HCT116 (cell line): ENCODE measurements at regions of chr10 and their contacts with region 1.

Region 1: GRCh38 chr10:4767033-4767814 is 58.8 kb upstream of the AKR1E2 start:
- DNase-seq: peak; percentile 38
- ATAC-seq: peak; percentile 58
- H3K4me3 ChIP-seq: no peak overlapping the region
- H3K27ac ChIP-seq: no peak overlapping the region
- H3K4me1 ChIP-seq: peaks cover 13 to 66% of the 10 kb centered on the region in 2 experiments
- H3K27me3 ChIP-seq: no peaks in the 10 kb centered on the region
- CTCF ChIP-seq: peak; percentile 51 to 71 (median 69); a peak in 5 of 6 replicates
- POLR2A ChIP-seq: no peak
- RAD21 ChIP-seq: peak; percentile 90

Region 2: GRCh38 chr10:3197348-3198003 is 1569.7 kb before region 1 on chr10:
- CTCF ChIA-PET with region 1: interaction called, 15 read pairs
- POLR2A ChIA-PET with region 1: interaction called, 4 read pairs
- RAD21 ChIA-PET with region 1: interaction called, 4 read pairs
- intact Hi-C with region 1: loop called (anchors 1 kb)
- DNase-seq: peak; percentile 74
- ATAC-seq: peak; percentile 97
- H3K4me3 ChIP-seq: peak overlapping the region; percentile 27 to 47
- H3K27ac ChIP-seq: no peak overlapping the region
- H3K4me1 ChIP-seq: peaks cover 7 to 14% of the 10 kb centered on the region in 2 experiments; a peak in 3 of 4 replicates
- H3K27me3 ChIP-seq: peaks cover 24% of the 10 kb centered on the region; the same call in 1 of the 2 replicates
- CTCF ChIP-seq: peak; percentile 78 to 96 (median 87)
- POLR2A ChIP-seq: no peak
- RAD21 ChIP-seq: peak; percentile 99

Region 3: GRCh38 chr10:4174197-4174596 is 593.0 kb before region 1 on chr10:
- CTCF ChIA-PET with region 1: no interaction called
- POLR2A ChIA-PET with region 1: no interaction called
- RAD21 ChIA-PET with region 1: interaction called in 1 of 2 experiments, 4 read pairs
- intact Hi-C with region 1: loop called (anchors 1 kb)
- DNase-seq: no peak
- ATAC-seq: peak; percentile 79
- H3K4me3 ChIP-seq: no peak overlapping the region
- H3K27ac ChIP-seq: no peak overlapping the region
- H3K4me1 ChIP-seq: peaks cover 0 to 5% of the 10 kb centered on the region in 2 experiments; a peak in 1 of 4 replicates
- H3K27me3 ChIP-seq: no peaks in the 10 kb centered on the region
- CTCF ChIP-seq: peak; percentile 31 to 66 (median 46); a peak in 5 of 6 replicates
- POLR2A ChIP-seq: no peak
- RAD21 ChIP-seq: peak; percentile 77

Region 4: DNA sequence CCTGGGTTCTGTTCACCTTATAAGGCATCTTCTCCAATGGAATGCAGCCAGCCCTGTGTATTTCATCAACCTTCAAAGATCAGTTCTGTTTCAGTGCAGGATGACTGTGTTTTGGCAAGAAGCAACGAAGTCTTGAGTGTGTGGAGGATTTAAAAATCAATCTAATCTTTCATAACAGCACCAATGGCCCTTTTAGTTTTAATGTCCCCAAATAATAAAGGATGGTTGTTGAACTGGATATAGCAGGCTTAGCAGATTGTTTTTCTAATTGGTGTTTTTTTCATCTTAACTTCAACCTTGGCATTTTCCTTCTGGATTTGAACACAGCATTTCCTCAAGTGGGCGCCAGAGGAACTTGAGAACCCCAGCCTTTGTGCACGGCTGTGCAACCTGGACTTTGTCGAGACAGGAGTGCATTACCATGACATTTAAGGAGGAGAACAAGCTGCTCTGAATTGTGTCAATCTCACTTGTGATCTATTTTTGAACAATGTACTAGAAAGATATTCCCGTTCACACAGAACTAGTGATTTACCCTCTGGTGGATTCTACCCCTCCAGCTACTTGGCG is 254.5 kb before region 1 on chr10:
- CTCF ChIA-PET with region 1: interaction called, 11 read pairs
- POLR2A ChIA-PET with region 1: no interaction called
- RAD21 ChIA-PET with region 1: no interaction called
- intact Hi-C with region 1: loop called (anchors 2 kb)
- DNase-seq: peak; percentile 36
- ATAC-seq: peak; percentile 83
- H3K4me3 ChIP-seq: no peak overlapping the region
- H3K27ac ChIP-seq: no peak overlapping the region
- H3K4me1 ChIP-seq: peaks cover 0 to 5% of the 10 kb centered on the region in 2 experiments; a peak in 1 of 4 replicates
- H3K27me3 ChIP-seq: no peaks in the 10 kb centered on the region
- CTCF ChIP-seq: peak; percentile 62 to 71 (median 63); a peak in 4 of 6 replicates
- POLR2A ChIP-seq: no peak
- RAD21 ChIP-seq: peak; percentile 87

Region 5: GRCh38 chr10:4595719-4596319 is 171.4 kb before region 1 on chr10:
- CTCF ChIA-PET with region 1: no interaction called
- POLR2A ChIA-PET with region 1: no interaction called
- RAD21 ChIA-PET with region 1: no interaction called
- intact Hi-C with region 1: no loop called
- DNase-seq: no peak
- ATAC-seq: no peak
- H3K4me3 ChIP-seq: no peak overlapping the region
- H3K27ac ChIP-seq: no peak overlapping the region
- H3K4me1 ChIP-seq: no peaks in the 10 kb centered on the region
- H3K27me3 ChIP-seq: no peaks in the 10 kb centered on the region
- CTCF ChIP-seq: no peak
- POLR2A ChIP-seq: no peak
- RAD21 ChIP-seq: no peak

Region 6: GRCh38 chr10:4671451-4672145 is 95.6 kb before region 1 on chr10:
- CTCF ChIA-PET with region 1: interaction called, 4 read pairs
- POLR2A ChIA-PET with region 1: no interaction called
- RAD21 ChIA-PET with region 1: no interaction called
- intact Hi-C with region 1: loop called (anchors 5 kb)
- DNase-seq: peak; percentile 77
- ATAC-seq: peak; percentile 86
- H3K4me3 ChIP-seq: peak overlapping the region; percentile 27 to 47
- H3K27ac ChIP-seq: peak overlapping the region; percentile 69
- H3K4me1 ChIP-seq: peaks cover 10 to 44% of the 10 kb centered on the region in 2 experiments
- H3K27me3 ChIP-seq: no peaks in the 10 kb centered on the region
- CTCF ChIP-seq: no peak
- POLR2A ChIP-seq: no peak
- RAD21 ChIP-seq: peak; percentile 15; the same call in 1 of the 2 replicates